Naive thymus-derived CD4-positive, alpha-beta T cell (primary cell): ENCODE measurements at regions of chr17 and their contacts with region 1.

Region 1: GRCh38 chr17:76868176-76868668 is at the start of gene MGAT5B:
- DNase-seq: peak; percentile 57 to 91 (median 79)
- ATAC-seq: peak; percentile 96
- H3K4me3 ChIP-seq: peak within 1 kb of the TSS; percentile 20
- H3K4me3 Mint-ChIP-seq: peak within 1 kb of the TSS; percentile 60 to 86 (median 81)
- H3K27ac ChIP-seq: no peak within 1 kb of the TSS
- H3K27ac Mint-ChIP-seq: peak within 1 kb of the TSS in 3 of 9 donors; percentile 15 to 82 (median 76)
- H3K4me1 ChIP-seq: peaks cover 5 to 13% of the 10 kb centered on the region in 2 donors
- H3K4me1 Mint-ChIP-seq: peaks cover 4 to 13% (median 10%) of the 10 kb centered on the region in 7 donors
- H3K27me3 ChIP-seq: peaks cover 4 to 5% of the 10 kb centered on the region in 2 donors
- H3K27me3 Mint-ChIP-seq: peaks cover 14 to 45% (median 24%) of the 10 kb centered on the region in 5 donors
- total RNA-seq, gene MGAT5B: 0.24 to 3.7 (median 2.5) TPM

Region 2: GRCh38 chr17:77054936-77055335 is 186.7 kb after region 1 on chr17:
- CTCF ChIA-PET with region 1: interaction called, 73 read pairs
- POLR2A ChIA-PET with region 1: no interaction called
- intact Hi-C with region 1: loop called (anchors 1 kb)
- DNase-seq: no peak
- ATAC-seq: no peak
- H3K4me3 ChIP-seq: no peak overlapping the region
- H3K4me3 Mint-ChIP-seq: no peak overlapping the region
- H3K27ac ChIP-seq: no peak overlapping the region
- H3K27ac Mint-ChIP-seq: no peak overlapping the region
- H3K4me1 ChIP-seq: no peaks in the 10 kb centered on the region
- H3K4me1 Mint-ChIP-seq: peaks cover 0 to 5% (median 0%) of the 10 kb centered on the region in 7 donors
- H3K27me3 ChIP-seq: peaks cover 0 to 5% of the 10 kb centered on the region in 2 donors
- H3K27me3 Mint-ChIP-seq: peaks cover 4 to 21% (median 10%) of the 10 kb centered on the region in 5 donors

Region 3: GRCh38 chr17:77068915-77069314 is 200.7 kb after region 1 on chr17:
- CTCF ChIA-PET with region 1: interaction called, 44 read pairs
- POLR2A ChIA-PET with region 1: no interaction called
- intact Hi-C with region 1: loop called in 1 of 2 experiments (anchors 1 kb)
- DNase-seq: no peak
- ATAC-seq: no peak
- H3K4me3 ChIP-seq: no peak overlapping the region
- H3K4me3 Mint-ChIP-seq: no peak overlapping the region
- H3K27ac ChIP-seq: no peak overlapping the region
- H3K27ac Mint-ChIP-seq: no peak overlapping the region
- H3K4me1 ChIP-seq: no peaks in the 10 kb centered on the region
- H3K4me1 Mint-ChIP-seq: peaks cover 0 to 6% (median 0%) of the 10 kb centered on the region in 7 donors
- H3K27me3 ChIP-seq: no peaks in the 10 kb centered on the region
- H3K27me3 Mint-ChIP-seq: peaks cover 18 to 42% (median 29%) of the 10 kb centered on the region in 5 donors

Region 4: DNA sequence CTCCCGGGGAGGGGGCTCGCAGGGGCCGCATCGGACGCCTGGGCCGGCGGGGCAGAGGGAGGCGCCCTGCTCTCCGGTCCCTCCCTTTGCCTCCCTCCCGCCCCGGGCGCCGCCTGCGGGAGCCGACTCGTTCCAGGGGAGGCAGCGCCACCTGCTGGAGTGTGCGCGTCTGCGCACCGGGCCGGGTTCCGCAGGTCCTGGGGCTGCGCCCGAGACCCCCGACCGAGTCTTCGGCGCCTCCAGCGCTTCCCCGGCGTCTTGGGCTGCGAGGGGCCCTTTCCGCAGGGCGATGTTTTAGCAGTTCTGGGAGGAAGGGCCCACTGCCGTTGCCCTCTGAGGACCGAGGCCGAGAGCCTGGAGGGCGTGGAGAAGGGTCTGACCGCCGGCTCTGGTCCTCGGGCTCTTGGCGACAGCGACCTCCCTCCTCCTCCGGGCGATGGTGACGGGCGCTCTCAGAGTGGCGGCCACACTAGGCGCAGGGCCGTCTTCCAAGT is 378.9 kb after region 1 on chr17:
- CTCF ChIA-PET with region 1: interaction called, 3 read pairs
- POLR2A ChIA-PET with region 1: no interaction called
- intact Hi-C with region 1: loop called (anchors 1 kb)
- DNase-seq: peak; percentile 62 to 93 (median 83)
- ATAC-seq: peak; percentile 99
- H3K4me3 ChIP-seq: peak overlapping the region; percentile 35
- H3K4me3 Mint-ChIP-seq: peak overlapping the region; percentile 29 to 81 (median 66)
- H3K27ac ChIP-seq: no peak overlapping the region
- H3K27ac Mint-ChIP-seq: peak overlapping the region in 1 of 9 donors; percentile 61
- H3K4me1 ChIP-seq: peaks cover 0 to 5% of the 10 kb centered on the region in 2 donors
- H3K4me1 Mint-ChIP-seq: peaks cover 3 to 22% (median 7%) of the 10 kb centered on the region in 7 donors
- H3K27me3 ChIP-seq: no peaks in the 10 kb centered on the region
- H3K27me3 Mint-ChIP-seq: peaks cover 9 to 24% (median 13%) of the 10 kb centered on the region in 5 donors